GM18951 (cell line): ENCODE measurements at regions of chr1 and their contacts with region 1.

Region 1: DNA sequence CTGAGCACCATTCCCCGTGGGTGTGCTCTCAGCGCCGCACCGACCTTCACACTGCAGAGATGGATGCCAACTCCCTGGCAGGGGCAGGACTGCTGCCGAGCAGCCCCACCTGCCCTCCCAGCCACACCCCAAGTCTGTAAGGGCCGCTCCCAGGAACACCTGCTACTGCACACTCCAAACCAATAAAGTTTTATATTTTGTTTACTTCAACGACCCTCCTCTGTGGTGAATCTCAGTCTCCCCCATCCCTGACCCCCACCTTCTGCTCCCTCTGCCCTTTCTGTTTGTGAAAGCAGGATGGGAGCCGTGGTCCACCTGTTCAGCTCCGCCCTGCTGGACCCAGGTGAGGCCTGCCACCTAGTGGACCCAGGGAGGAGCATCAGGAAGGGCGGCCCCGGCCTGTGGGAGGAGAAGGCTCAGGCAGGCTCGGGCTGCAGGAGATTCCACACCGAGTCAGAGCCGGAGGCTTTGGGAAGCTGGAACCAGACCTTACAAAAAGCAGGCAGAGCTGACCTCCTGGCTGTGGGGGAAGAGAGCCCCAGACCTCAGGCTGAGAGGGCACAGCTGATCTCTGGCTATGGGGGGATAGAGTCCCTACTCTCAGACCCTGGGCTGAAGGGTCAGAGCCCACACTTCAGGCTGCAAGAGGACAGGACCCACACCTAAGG is 982 bp upstream of the TMEM82 start:
- POLR2A ChIP-seq: no peak

Region 2: DNA sequence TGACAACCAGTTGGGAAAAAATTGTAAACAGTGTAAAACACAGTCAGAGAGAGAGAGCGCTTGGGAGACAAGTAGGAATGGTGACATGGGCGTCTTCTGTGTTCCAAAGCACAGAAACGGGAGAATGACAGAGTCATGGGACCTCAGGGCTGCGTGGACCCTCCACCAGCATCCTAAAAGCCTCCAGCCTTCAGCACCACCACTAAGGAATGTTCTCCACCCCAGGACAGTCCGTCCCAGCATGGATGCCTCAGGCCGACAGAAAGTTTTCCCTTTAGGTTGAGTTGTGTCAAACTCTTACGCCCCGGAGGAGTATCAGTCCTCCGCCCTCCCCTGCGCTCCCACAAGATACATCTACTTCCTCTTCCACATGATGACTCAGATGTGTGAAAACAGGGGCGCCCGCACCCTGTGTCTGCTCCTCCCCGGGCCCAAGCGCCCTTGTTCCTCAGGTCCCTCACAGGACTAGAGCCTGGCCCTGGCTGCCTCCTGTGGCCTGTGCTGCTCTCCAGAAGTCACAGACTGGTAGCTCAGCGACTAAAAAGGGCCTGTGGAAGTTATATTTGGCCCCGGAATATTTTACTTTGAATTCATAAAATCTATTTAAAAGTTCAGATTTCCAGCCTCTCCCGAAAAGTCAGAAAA is 395.5 kb before region 1 on chr1:
- in situ Hi-C with region 1: loop called (anchors 25 kb)
- POLR2A ChIP-seq: no peak

Region 3: DNA sequence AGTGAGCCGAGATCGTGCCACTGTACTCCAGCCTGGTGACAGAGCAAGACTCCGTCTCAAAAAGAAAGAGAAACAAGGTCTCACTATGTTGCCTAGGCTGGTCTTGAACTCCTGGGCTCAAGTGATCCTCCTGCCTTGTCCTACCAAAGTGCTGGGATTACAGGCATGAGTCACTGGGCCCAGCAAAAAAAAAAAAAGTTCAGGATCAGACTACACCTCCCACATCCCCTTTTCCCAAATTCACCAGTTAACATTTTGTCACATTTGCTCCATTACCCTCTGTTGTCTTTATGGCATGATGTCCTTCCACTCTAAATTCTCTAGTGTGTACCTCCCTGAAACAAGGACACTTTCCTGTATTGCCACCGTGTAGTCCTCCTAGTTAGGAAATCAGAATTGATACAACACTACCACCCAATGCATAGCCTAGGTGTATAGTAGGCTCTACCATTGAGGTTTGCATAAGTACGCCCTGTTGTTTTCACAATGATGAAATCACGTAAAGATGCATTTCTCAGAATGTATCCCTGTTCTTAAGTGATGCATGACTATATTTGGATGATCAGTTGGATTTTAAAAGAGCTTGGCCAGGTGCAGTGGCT is 116.9 kb after region 1 on chr1:
- in situ Hi-C with region 1: no loop called
- POLR2A ChIP-seq: no peak